Endothelial cell of umbilical vein (primary cell): ENCODE measurements at regions of chr19 and their contacts with region 1.

Region 1: GRCh38 chr19:2507109-2507508 is 31.2 kb downstream of the GADD45B start:
- DNase-seq: peak; percentile 93
- H3K4me3 ChIP-seq: no peak overlapping the region
- H3K27ac ChIP-seq: peak overlapping the region; percentile 86
- H3K4me1 ChIP-seq: peaks cover 8% of the 10 kb centered on the region
- H3K27me3 ChIP-seq: no peaks in the 10 kb centered on the region
- CTCF ChIP-seq: no peak
- POLR2A ChIP-seq: peak; percentile 63

Region 2: GRCh38 chr19:2488942-2489731 is 18.0 kb before region 1 on chr19:
- CTCF ChIA-PET with region 1: no interaction called
- POLR2A ChIA-PET with region 1: no interaction called
- dilution Hi-C with region 1: no loop called
- intact Hi-C with region 1: loop called (anchors 2 kb)
- DNase-seq: peak; percentile 34
- H3K4me3 ChIP-seq: peak overlapping the region; percentile 14 to 25 (median 15)
- H3K27ac ChIP-seq: peak overlapping the region; percentile 19
- H3K4me1 ChIP-seq: peaks cover 18% of the 10 kb centered on the region
- H3K27me3 ChIP-seq: no peaks in the 10 kb centered on the region
- CTCF ChIP-seq: no peak
- POLR2A ChIP-seq: no peak